HepG2 (cell line): ENCODE measurements at regions of chr9 and their contacts with region 1.

Region 1: DNA sequence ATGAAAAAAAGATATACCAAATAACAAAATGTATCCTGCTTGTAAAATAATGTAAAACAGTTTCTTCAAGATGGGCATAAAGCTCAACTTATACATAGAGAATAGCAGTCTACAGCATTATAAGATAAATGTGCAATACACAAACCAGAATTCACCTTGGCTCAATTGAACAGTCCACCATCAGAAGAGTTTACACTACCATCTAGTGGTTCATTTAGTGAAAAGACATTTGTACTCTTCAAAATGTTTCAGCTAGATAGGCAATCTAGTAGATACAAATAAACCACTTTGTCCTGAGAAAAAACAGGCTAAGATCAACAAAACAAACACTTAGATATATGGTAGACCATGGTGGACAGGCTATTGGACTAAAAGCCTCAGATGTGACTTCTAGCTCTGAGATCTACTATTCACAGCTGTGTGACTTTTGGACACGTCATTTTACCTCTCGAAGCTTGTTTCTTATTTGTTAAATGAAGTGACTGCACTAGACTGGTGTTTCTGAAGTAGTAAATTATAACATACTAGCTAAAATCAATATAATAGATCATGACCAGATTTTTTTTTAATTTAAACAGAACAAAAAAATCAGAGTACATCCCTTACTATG is 22.1 kb upstream of the TPD52L3 start:
- DNase-seq: peak; percentile 42
- ATAC-seq: peak; percentile 77
- H3K4me3 ChIP-seq: no peak overlapping the region
- H3K27ac ChIP-seq: no peak overlapping the region
- H3K4me1 ChIP-seq: no peaks in the 10 kb centered on the region
- H3K27me3 ChIP-seq: no peaks in the 10 kb centered on the region
- CTCF ChIP-seq: peak; percentile 78
- EP300 ChIP-seq: no peak
- POLR2A ChIP-seq: no peak
- RAD21 ChIP-seq: peak; percentile 71

Region 2: GRCh38 chr9:5879419-5880181 is 426.5 kb before region 1 on chr9:
- CTCF ChIA-PET with region 1: no interaction called
- POLR2A ChIA-PET with region 1: no interaction called
- in situ Hi-C with region 1: loop called (anchors 10 kb)
- intact Hi-C with region 1: no loop called
- DNase-seq: peak; percentile 46
- ATAC-seq: no peak
- H3K4me3 ChIP-seq: no peak overlapping the region
- H3K27ac ChIP-seq: no peak overlapping the region
- H3K4me1 ChIP-seq: peaks cover 8% of the 10 kb centered on the region
- H3K27me3 ChIP-seq: no peaks in the 10 kb centered on the region
- CTCF ChIP-seq: no peak
- EP300 ChIP-seq: no peak
- POLR2A ChIP-seq: no peak
- RAD21 ChIP-seq: no peak

Region 3: DNA sequence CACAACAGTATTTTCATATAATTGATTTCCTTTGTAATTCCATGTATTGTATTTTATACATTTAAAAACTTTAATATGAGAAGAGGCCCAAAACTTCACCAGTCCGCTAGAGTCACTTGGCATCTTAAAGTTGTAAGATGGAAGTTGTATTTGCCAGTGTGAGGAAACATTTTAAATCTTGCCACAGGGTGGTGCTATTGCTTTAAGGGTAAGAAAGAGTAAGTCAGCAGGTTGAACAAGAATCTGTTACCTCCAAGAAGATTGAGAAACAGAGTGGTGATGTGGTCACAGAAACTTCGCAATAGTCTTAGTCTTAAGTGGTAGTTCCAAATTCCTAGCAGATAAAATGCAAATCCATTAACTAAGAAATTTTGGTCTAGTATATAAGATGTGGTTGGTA is 250.8 kb before region 1 on chr9:
- CTCF ChIA-PET with region 1: interaction called, 38 read pairs
- POLR2A ChIA-PET with region 1: no interaction called
- in situ Hi-C with region 1: loop called (anchors 10 kb)
- intact Hi-C with region 1: loop called (anchors 1 kb)
- DNase-seq: peak; percentile 66
- ATAC-seq: peak; percentile 61; the same call in 2 of the 3 replicates
- H3K4me3 ChIP-seq: no peak overlapping the region
- H3K27ac ChIP-seq: no peak overlapping the region
- H3K4me1 ChIP-seq: no peaks in the 10 kb centered on the region
- H3K27me3 ChIP-seq: no peaks in the 10 kb centered on the region
- CTCF ChIP-seq: peak; percentile 69
- EP300 ChIP-seq: no peak
- POLR2A ChIP-seq: no peak
- RAD21 ChIP-seq: peak; percentile 59

Region 4: GRCh38 chr9:6126374-6126773 is 179.7 kb before region 1 on chr9:
- CTCF ChIA-PET with region 1: no interaction called
- POLR2A ChIA-PET with region 1: no interaction called
- in situ Hi-C with region 1: no loop called
- intact Hi-C with region 1: loop called (anchors 5 kb)
- DNase-seq: no peak
- ATAC-seq: no peak
- H3K4me3 ChIP-seq: no peak overlapping the region
- H3K27ac ChIP-seq: no peak overlapping the region
- H3K4me1 ChIP-seq: no peaks in the 10 kb centered on the region
- H3K27me3 ChIP-seq: peaks cover 2% of the 10 kb centered on the region in 2 experiments; a peak in 3 of 5 replicates
- CTCF ChIP-seq: no peak
- EP300 ChIP-seq: no peak
- POLR2A ChIP-seq: no peak
- RAD21 ChIP-seq: no peak

Region 5: DNA sequence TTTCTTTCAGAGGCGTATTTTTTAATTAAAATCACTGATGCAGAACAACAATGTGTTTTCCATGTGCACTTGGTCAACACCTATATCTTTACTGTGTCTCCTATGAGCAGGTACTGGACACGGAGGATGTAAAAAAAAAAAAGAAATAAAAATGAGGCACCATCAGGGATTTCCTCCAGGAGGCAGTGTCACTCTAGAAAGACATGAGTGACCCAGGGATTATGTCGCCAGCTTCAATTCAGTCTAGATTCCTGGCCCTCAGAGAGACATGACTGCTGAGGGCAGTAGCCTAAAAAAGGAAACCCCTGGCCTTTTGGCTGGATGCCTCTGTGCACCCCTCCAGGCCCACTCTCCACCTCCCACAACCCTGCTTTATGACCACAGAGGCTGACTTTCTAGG is 108.7 kb before region 1 on chr9:
- CTCF ChIA-PET with region 1: interaction called, 41 read pairs
- POLR2A ChIA-PET with region 1: no interaction called
- in situ Hi-C with region 1: loop called (anchors 5 kb)
- intact Hi-C with region 1: loop called (anchors 1 kb)
- DNase-seq: peak; percentile 31
- ATAC-seq: peak; percentile 74
- H3K4me3 ChIP-seq: no peak overlapping the region
- H3K27ac ChIP-seq: no peak overlapping the region
- H3K4me1 ChIP-seq: no peaks in the 10 kb centered on the region
- H3K27me3 ChIP-seq: no peaks in the 10 kb centered on the region
- CTCF ChIP-seq: peak; percentile 70
- EP300 ChIP-seq: no peak
- POLR2A ChIP-seq: no peak
- RAD21 ChIP-seq: peak; percentile 22; the same call in 1 of the 2 replicates

Region 6: DNA sequence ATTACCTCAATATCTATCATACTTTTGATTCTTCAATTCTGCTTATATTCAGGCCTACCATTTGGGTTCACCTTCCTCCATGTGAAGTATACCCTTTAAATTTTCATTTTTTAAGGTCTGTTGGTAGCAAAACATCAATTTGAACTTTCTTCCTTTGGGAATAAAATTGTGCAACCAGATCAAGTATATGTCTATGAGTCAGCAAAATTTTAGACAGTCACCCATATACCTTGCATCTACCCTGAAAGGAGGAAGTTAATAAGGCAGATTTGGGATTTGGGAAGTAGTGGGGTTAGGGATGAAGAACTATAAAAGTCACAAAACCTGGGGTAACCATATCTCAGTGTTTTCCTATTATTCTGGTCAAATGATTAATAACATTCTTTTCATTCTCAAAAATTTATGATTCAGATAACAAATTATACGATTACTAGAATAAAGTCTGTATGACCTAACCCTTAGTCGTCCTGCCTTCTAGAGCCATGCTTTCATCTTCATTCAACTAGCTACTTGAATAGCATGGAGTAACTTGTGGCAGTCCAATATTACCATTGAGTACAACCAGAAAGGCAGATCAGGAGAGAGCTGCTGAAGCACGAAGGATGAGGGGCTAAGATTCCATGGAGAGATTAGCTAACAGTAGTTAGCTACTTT is 93.2 kb before region 1 on chr9:
- CTCF ChIA-PET with region 1: no interaction called
- POLR2A ChIA-PET with region 1: no interaction called
- in situ Hi-C with region 1: no loop called
- intact Hi-C with region 1: no loop called
- DNase-seq: no peak
- ATAC-seq: no peak
- H3K4me3 ChIP-seq: no peak overlapping the region
- H3K27ac ChIP-seq: no peak overlapping the region
- H3K4me1 ChIP-seq: no peaks in the 10 kb centered on the region
- H3K27me3 ChIP-seq: no peaks in the 10 kb centered on the region
- CTCF ChIP-seq: no peak
- EP300 ChIP-seq: no peak
- POLR2A ChIP-seq: no peak
- RAD21 ChIP-seq: no peak

Region 7: GRCh38 chr9:6367128-6367890 is 61.2 kb after region 1 on chr9:
- CTCF ChIA-PET with region 1: no interaction called
- POLR2A ChIA-PET with region 1: no interaction called
- in situ Hi-C with region 1: no loop called
- intact Hi-C with region 1: no loop called
- DNase-seq: no peak
- ATAC-seq: no peak
- H3K4me3 ChIP-seq: no peak overlapping the region
- H3K27ac ChIP-seq: no peak overlapping the region
- H3K4me1 ChIP-seq: no peaks in the 10 kb centered on the region
- H3K27me3 ChIP-seq: no peaks in the 10 kb centered on the region; a peak in 1 of 5 replicates
- CTCF ChIP-seq: no peak
- EP300 ChIP-seq: no peak
- POLR2A ChIP-seq: no peak
- RAD21 ChIP-seq: no peak

Region 8: DNA sequence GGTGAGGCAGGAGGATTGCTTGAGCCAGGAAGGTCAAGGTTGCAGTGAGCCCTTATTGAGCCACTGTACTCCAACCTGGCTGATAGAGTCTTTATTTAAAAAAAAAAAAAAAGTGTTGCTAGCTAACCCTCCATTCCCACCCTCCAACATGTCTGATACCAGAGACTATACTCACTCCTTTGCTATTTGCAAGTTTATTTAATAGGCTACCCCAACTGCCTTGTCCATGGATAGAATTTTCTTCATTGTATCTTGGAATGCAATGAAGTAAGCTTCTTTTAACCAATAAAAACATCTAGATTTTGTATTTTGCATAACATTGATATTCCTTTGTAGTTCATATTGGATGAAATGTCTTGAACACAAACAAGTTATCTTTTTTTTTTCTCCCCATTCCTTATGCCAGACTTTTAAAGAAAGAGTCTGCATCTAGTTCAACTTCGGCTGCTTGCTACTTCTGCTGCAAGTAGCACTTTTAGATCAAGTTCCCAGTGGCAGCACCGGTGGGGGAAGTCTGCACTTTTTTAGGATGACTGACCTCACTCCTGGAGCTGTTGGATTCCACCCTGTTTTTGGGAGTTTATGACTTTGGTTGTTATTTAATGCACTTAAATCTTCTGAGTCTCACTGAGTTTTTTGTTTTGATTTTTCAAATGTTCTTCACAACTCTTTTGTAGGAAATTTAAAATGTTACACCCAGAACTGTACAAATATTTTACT is 219.4 kb after region 1 on chr9:
- CTCF ChIA-PET with region 1: no interaction called
- POLR2A ChIA-PET with region 1: no interaction called
- in situ Hi-C with region 1: no loop called
- intact Hi-C with region 1: no loop called
- DNase-seq: no peak
- ATAC-seq: no peak
- H3K4me3 ChIP-seq: no peak overlapping the region
- H3K27ac ChIP-seq: peak overlapping the region; percentile 32
- H3K4me1 ChIP-seq: peaks cover 12% of the 10 kb centered on the region
- H3K27me3 ChIP-seq: no peaks in the 10 kb centered on the region
- CTCF ChIP-seq: no peak
- EP300 ChIP-seq: no peak
- POLR2A ChIP-seq: no peak
- RAD21 ChIP-seq: no peak